Tibial artery (tissue), 4 donors: ENCODE measurements at regions of chr3 and their contacts with region 1.

Region 1: GRCh38 chr3:16177962-16178627 is 3.6 kb downstream of the GALNT15 start:
- DNase-seq: peak; percentile 80 to 89
- H3K4me3 ChIP-seq: peak overlapping the region; percentile 55 to 63
- H3K27ac ChIP-seq: peak overlapping the region in 1 of 2 donors; percentile 29
- H3K4me1 ChIP-seq: peaks cover 0 to 64% (median 25%) of the 10 kb centered on the region in 4 donors
- H3K27me3 ChIP-seq: no peaks in the 10 kb centered on the region
- CTCF ChIP-seq: peak; percentile 95 to 96

Region 2: DNA sequence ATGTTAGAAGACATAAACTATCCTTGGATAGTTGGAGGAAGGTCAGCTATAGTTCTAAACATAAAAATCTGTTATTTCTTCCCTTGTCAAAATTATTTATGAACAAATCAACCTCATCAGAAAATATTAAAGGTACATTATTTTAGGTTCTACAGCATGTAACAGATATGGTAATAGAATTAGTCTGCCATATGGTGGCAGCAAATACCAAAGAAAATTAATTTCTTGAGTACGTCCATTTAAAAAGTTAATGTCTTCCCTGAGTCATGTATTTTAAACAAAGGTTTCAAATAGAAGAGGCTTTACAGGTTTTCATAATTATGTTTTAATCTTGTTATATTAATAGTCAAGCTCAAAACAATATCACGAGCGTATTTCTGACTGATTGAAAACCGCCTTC is 362.4 kb before region 1 on chr3:
- intact Hi-C with region 1: loop called (anchors 5 kb)
- DNase-seq: no peak
- H3K4me3 ChIP-seq: no peak overlapping the region
- H3K27ac ChIP-seq: no peak overlapping the region
- H3K4me1 ChIP-seq: peaks cover 0 to 13% (median 0%) of the 10 kb centered on the region in 4 donors
- H3K27me3 ChIP-seq: no peaks in the 10 kb centered on the region
- CTCF ChIP-seq: peak; percentile 50

Region 3: DNA sequence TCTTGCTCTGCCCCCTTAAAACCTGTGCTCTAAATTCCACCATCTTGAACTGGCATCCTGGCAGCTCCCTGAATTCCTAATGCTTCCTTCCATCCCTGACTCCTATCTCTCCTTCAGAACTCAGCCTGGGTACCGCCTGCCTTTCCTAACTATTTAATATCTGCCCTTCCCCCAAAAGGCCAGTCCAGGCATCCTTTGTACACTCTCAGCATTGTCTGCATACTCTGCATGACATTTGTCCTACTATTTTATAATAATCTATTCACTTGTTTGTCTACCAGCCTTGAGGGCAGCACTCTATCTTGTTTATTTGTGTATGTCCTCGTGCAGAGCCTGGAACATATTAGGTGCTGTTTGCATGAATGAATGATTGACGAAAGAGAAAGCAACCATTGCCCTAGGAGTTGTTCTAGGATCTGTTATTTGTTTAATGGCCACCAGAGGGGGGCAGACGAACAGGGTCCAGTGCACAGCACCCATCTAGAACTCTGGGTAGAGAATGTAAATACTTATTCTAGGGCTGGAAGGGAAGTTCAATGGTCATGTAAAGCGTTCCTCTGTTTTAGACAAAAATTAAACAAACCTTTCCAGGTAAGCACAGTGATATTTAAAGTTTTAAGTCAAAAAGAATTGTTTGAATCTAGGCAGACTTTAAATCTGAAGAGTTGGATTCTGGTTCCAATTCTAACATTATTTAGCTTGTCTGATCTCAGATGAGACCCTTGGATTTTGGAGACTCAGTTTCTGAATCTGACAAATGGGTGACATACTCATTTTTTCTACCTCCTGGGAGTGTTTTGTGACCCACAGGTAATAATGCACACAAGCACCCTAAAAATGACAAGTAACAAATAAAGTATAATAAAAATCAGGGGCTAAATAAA is 129.4 kb before region 1 on chr3:
- intact Hi-C with region 1: loop called (anchors 2 kb)
- DNase-seq: no peak
- H3K4me3 ChIP-seq: no peak overlapping the region
- H3K27ac ChIP-seq: no peak overlapping the region
- H3K4me1 ChIP-seq: peaks cover 0 to 21% (median 0%) of the 10 kb centered on the region in 4 donors
- H3K27me3 ChIP-seq: no peaks in the 10 kb centered on the region
- CTCF ChIP-seq: peak; percentile 78 to 92